Posterior vena cava (tissue), 2 donors: ENCODE measurements at regions of chr22 and their contacts with region 1.

Region 1: GRCh38 chr22:28237112-28237511 is 318.1 kb upstream of the PITPNB start:
- DNase-seq: no peak

Region 2: DNA sequence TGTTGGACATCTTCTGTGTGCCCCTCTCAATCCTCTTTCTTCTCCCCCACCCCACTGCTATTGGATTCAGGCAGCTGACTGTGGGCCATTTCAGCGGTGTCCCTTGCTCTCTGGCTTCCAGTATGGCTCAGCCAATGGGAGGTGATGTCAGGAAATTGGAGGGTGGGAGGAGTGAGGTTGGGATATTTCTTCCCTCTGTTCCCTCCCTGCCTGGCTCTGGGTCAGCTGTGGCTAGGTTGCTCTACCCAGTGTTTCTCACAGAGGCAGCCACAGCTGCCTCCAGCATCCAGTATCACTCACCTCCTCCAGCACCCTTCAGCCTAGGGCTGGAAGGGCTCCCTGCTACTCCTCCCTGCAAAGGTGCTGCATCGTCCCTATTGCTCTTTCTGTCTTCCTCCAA is 1156.2 kb before region 1 on chr22:
- intact Hi-C with region 1: loop called in 1 of 2 experiments (anchors 5 kb)
- DNase-seq: no peak

Region 3: GRCh38 chr22:28268171-28268570 is 31.1 kb after region 1 on chr22:
- intact Hi-C with region 1: no loop called
- DNase-seq: no peak

Region 4: DNA sequence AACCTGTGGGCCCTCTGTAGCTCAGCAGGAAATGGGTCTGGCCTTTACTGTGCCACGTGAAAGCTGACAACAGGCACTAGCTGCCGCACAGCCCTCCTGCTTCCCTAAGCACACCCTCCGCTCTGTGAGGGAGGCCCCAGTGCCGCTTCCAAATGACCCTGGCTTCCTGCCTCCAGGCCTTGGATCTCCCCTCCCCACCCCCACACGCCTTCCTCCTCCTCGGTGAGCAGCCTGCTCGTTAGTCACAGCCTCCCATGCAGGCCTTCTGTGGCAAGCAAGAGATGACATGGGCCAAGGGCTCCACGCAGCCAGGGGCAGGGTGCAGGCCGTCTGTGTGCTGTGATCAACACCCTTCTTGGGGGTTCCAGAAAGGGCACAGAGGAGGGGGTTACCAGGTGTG is 1093.6 kb after region 1 on chr22:
- intact Hi-C with region 1: no loop called
- DNase-seq: no peak

Region 5: GRCh38 chr22:29397791-29398190 is 1160.7 kb after region 1 on chr22:
- intact Hi-C with region 1: no loop called
- DNase-seq: no peak